H1 (cell line): ENCODE measurements at regions of chr2 and their contacts with region 1.

Region 1: GRCh38 chr2:241149925-241150659 is at the start of gene PPP1R7:
- DNase-seq: peak; percentile 87 to 88
- H3K4me3 ChIP-seq: peak within 1 kb of the TSS; percentile 71 to 83 (median 79)
- H3K27ac ChIP-seq: no peak within 1 kb of the TSS; the same call in 1 of the 2 replicates
- H3K4me1 ChIP-seq: peaks cover 0 to 11% (median 7%) of the 10 kb centered on the region in 4 experiments; a peak in 6 of 7 replicates
- H3K27me3 ChIP-seq: 0 out of 7 replicates have a peak, but pooled peaks cover 0 to 3% (median 2%) of the 10 kb centered on the region in 4 experiments
- CTCF ChIP-seq: peak in 1 of 3 experiments; percentile 6; a peak in 1 of 4 replicates
- EP300 ChIP-seq: no peak
- POLR2A ChIP-seq: no peak; a peak in 1 of 3 replicates
- RAD21 ChIP-seq: 0 out of 4 replicates have a peak, but pooled peaks of 1 of the 2 experiments have one; percentile 6
- total RNA-seq, gene PPP1R7: 51.9 and 64.0 TPM in 2 replicates

Region 2: GRCh38 chr2:241102239-241102803 is 47.8 kb before region 1 on chr2 and contains the start of gene MTERF4:
- CTCF ChIA-PET with region 1: no interaction called
- POLR2A ChIA-PET with region 1: interaction called, 10 read pairs
- DNase-seq: peak; percentile 41 to 90
- H3K4me3 ChIP-seq: peak within 1 kb of the TSS; percentile 85 to 94 (median 92)
- H3K27ac ChIP-seq: peak within 1 kb of the TSS; percentile 72
- H3K4me1 ChIP-seq: peaks cover 0 to 5% (median 0%) of the 10 kb centered on the region in 4 experiments; a peak in 2 of 7 replicates
- H3K27me3 ChIP-seq: no peaks in the 10 kb centered on the region
- CTCF ChIP-seq: peak in 1 of 3 experiments; percentile 0; a peak in 1 of 4 replicates
- EP300 ChIP-seq: peak; percentile 7 to 49; a peak in 2 of 3 replicates
- POLR2A ChIP-seq: peak; percentile 66 to 79
- RAD21 ChIP-seq: 0 out of 4 replicates have a peak, but pooled peaks of 1 of the 2 experiments have one; percentile 10
- total RNA-seq, gene MTERF4: 25.8 and 25.9 TPM in 2 replicates

Region 3: GRCh38 chr2:241179899-241180298 is 29.8 kb after region 1 on chr2:
- CTCF ChIA-PET with region 1: interaction called, 15 read pairs
- POLR2A ChIA-PET with region 1: no interaction called
- DNase-seq: no peak
- H3K4me3 ChIP-seq: no peak overlapping the region
- H3K27ac ChIP-seq: no peak overlapping the region
- H3K4me1 ChIP-seq: no peaks in the 10 kb centered on the region
- H3K27me3 ChIP-seq: no peaks in the 10 kb centered on the region
- CTCF ChIP-seq: no peak
- EP300 ChIP-seq: no peak
- POLR2A ChIP-seq: no peak
- RAD21 ChIP-seq: no peak